Activated CD8-positive, alpha-beta memory T cell treated with anti-CD3 and anti-CD28 coated beads, Interleukin-2, amount 10 ng/mL, durations not matched to agents 7 days and 5 days (primary cell): ENCODE measurements at regions of chr15 and their contacts with region 1.

Region 1: GRCh38 chr15:75367913-75368688 is at the start of gene MAN2C1:
- DNase-seq: peak; percentile 96
- ATAC-seq: peak; percentile 95
- H3K4me3 Mint-ChIP-seq: peak within 1 kb of the TSS; percentile 79
- H3K27ac Mint-ChIP-seq: peak within 1 kb of the TSS; percentile 90
- H3K4me1 Mint-ChIP-seq: peaks cover 29% of the 10 kb centered on the region
- H3K27me3 Mint-ChIP-seq: no peaks in the 10 kb centered on the region
- total RNA-seq, gene MAN2C1: 143 to 170 TPM

Region 2: GRCh38 chr15:75249726-75250125 is 118.4 kb before region 1 on chr15:
- CTCF ChIA-PET with region 1: no interaction called
- DNase-seq: no peak
- ATAC-seq: no peak
- H3K4me3 Mint-ChIP-seq: no peak overlapping the region
- H3K27ac Mint-ChIP-seq: no peak overlapping the region
- H3K4me1 Mint-ChIP-seq: peaks cover 1% of the 10 kb centered on the region
- H3K27me3 Mint-ChIP-seq: peaks cover 58% of the 10 kb centered on the region

Region 3: DNA sequence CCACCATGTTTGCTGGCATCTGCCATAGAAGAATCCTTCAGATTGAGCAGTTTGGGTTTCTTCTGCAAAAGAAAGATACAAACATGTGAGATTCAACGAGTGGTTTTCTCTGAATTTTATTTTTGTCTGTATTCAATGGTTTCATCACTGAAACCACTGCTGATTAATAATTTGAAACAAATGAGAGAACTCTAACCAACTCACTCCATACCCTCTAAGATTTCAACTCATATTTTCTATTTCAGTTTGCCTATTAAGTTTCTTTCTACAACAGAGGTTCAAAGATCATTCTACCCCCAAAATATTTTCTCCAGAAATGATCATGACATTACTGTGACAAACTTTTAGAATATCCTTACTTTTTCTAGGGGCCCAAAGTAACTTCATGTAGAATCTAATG is 39.0 kb after region 1 on chr15:
- CTCF ChIA-PET with region 1: interaction called, 19 read pairs
- DNase-seq: no peak
- ATAC-seq: peak; percentile 51
- H3K4me3 Mint-ChIP-seq: no peak overlapping the region
- H3K27ac Mint-ChIP-seq: peak overlapping the region; percentile 34
- H3K4me1 Mint-ChIP-seq: peaks cover 47% of the 10 kb centered on the region
- H3K27me3 Mint-ChIP-seq: no peaks in the 10 kb centered on the region

Region 4: DNA sequence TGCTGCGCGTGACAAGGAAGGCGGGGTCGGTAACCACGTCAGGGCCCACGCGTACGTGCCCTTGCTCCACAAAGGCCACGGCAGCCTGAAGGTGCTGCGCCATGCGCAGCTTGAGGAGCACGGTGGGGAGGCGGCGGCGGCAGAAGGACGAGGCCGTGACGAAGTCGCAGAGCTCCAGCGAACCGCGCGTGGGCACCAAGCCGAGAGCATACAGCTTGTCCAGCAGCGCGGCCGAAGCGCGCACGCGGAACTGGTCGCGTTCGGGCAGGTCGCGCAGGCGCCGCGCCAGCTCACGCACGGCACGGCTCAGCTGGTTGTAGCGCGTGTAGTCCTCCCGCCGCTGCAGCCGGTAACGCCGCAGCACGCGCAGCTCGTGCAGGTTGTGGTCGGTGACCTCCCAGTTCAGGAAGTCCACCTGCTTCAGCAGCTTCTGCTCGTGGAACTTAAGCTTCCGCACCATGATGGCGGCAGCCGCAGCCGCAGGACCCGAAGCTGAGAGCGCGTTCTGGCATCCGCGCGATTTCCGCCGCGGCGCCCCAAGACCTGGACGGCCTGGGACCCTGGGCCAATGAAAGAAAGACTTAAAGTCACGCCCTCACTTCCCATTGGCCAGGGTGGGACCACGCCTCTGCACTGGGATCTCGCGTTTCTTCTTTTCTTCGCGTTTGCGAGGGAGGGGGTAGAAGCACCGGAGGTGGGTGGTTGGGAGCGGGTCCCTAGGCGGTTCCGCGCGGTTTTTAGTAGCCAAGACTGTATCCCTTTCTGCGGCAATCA is 271.8 kb after region 1 on chr15 and contains the start of gene IMP3:
- CTCF ChIA-PET with region 1: interaction called, 68 read pairs
- DNase-seq: peak; percentile 98
- ATAC-seq: peak; percentile 94
- H3K4me3 Mint-ChIP-seq: peak within 1 kb of the TSS; percentile 91
- H3K27ac Mint-ChIP-seq: peak within 1 kb of the TSS; percentile 93
- H3K4me1 Mint-ChIP-seq: peaks cover 35% of the 10 kb centered on the region
- H3K27me3 Mint-ChIP-seq: no peaks in the 10 kb centered on the region
- total RNA-seq, gene IMP3: 84.0 to 109 TPM

Region 5: GRCh38 chr15:75677465-75678323 is 309.6 kb after region 1 on chr15:
- CTCF ChIA-PET with region 1: interaction called, 34 read pairs
- DNase-seq: no peak
- ATAC-seq: no peak
- H3K4me3 Mint-ChIP-seq: no peak overlapping the region
- H3K27ac Mint-ChIP-seq: no peak overlapping the region
- H3K4me1 Mint-ChIP-seq: no peaks in the 10 kb centered on the region
- H3K27me3 Mint-ChIP-seq: no peaks in the 10 kb centered on the region